IMR-90 (cell line): ENCODE measurements at regions of chr1 and their contacts with region 1.

Region 1: DNA sequence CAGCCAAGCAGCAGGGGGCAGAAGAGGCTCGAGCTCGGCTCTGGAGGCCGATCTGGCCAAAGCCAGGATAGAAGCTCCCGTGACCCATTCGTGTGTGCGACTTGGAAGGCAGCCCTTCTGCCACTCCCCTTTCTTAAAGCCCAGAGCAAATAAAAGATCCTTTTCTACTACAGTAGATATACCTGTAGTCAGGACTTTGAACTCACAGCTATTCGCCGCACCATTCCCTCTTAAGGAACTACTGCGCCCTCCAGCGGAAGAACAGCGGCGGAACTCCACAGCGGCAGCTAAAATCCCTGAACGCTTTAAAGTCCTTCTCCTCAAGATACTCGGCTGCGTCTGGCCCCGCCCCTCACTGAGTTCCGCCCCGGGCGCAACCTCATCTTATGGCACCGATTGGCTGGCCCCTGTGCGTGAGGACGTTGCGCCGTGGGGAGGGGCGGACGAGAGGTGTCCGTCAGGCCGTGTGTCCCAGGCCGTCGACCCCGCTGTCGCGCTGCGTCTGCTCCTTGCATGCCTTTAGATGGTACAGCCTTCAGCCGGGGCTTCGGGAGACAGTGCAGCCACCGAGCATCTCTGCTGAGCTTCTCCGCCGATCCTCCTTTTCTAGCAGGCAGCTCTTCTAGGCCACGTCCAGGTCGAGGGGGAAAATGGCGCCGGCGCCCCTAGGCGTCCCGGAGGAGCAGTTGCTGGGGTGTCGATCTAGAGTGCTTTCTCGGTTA is at the start of gene LRIG2:
- DNase-seq: peak; percentile 97
- ATAC-seq: peak; percentile 98
- H3K4me3 ChIP-seq: peak within 1 kb of the TSS; percentile 85
- H3K27ac ChIP-seq: peak within 1 kb of the TSS; percentile 97
- H3K4me1 ChIP-seq: no peaks in the 10 kb centered on the region; the same call in 1 of the 2 replicates
- H3K27me3 ChIP-seq: no peaks in the 10 kb centered on the region
- CTCF ChIP-seq: peak; percentile 58
- POLR2A ChIP-seq: peak; percentile 60
- RAD21 ChIP-seq: peak; percentile 48; the same call in 1 of the 2 replicates
- total RNA-seq, gene LRIG2: 9.0 and 10.6 TPM in 2 replicates

Region 2: DNA sequence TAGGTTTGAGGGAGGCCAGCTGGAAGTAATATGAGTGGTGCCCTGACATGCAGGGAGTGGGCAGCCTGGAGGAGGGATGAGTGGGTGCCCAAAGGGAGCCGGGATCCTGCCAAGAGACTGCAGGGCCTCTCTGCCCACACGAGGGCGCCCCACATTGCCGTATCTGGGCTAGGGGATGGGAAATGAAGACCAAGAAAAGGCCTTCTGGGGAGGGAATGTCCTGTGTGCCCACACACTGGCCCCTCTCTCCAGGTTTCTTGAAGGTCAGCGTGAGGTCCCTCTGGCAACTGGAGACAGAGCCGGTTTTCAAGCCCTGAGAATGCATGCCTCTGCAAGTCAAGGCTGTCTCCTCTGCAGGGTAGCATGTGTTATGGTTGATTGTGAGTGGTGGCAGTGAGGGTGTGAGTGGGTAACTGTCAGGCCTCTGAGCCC is 263.6 kb before region 1 on chr1:
- CTCF ChIA-PET with region 1: interaction called, 3 read pairs
- POLR2A ChIA-PET with region 1: no interaction called
- dilution Hi-C with region 1: no loop called
- in situ Hi-C with region 1: no loop called
- intact Hi-C with region 1: loop called (anchors 2 kb)
- DNase-seq: peak; percentile 57
- ATAC-seq: peak; percentile 98
- H3K4me3 ChIP-seq: no peak overlapping the region
- H3K27ac ChIP-seq: no peak overlapping the region
- H3K4me1 ChIP-seq: no peaks in the 10 kb centered on the region
- H3K27me3 ChIP-seq: peaks cover 9% of the 10 kb centered on the region
- CTCF ChIP-seq: peak; percentile 87
- POLR2A ChIP-seq: no peak
- RAD21 ChIP-seq: peak; percentile 89

Region 3: GRCh38 chr1:113057006-113057405 is 15.9 kb before region 1 on chr1:
- CTCF ChIA-PET with region 1: interaction called, 27 read pairs
- POLR2A ChIA-PET with region 1: no interaction called
- dilution Hi-C with region 1: no loop called
- in situ Hi-C with region 1: no loop called
- intact Hi-C with region 1: no loop called
- DNase-seq: no peak
- ATAC-seq: peak; percentile 44
- H3K4me3 ChIP-seq: no peak overlapping the region
- H3K27ac ChIP-seq: no peak overlapping the region
- H3K4me1 ChIP-seq: no peaks in the 10 kb centered on the region
- H3K27me3 ChIP-seq: no peaks in the 10 kb centered on the region
- CTCF ChIP-seq: no peak
- POLR2A ChIP-seq: no peak
- RAD21 ChIP-seq: no peak

Region 4: DNA sequence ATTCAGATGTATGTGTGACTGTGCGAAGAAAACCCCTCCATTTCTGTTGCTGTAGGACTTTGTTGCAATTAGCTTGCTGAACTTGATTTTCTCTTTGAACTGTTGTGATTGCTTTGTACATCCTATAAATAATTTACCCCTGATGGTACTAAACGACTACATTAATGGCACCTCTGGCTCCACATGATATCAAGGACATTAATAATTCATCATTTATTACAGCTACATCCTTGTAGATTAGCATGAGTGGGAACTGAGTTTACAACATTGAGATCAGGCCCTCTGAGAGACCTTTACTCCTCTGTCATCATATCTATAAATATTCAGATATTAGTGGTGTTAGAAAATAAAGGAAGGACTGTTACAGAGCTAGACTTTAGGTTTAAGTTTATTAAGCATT is 13.6 kb after region 1 on chr1:
- CTCF ChIA-PET with region 1: interaction called, 15 read pairs
- POLR2A ChIA-PET with region 1: no interaction called
- dilution Hi-C with region 1: no loop called
- in situ Hi-C with region 1: no loop called
- intact Hi-C with region 1: no loop called
- DNase-seq: no peak
- ATAC-seq: no peak
- H3K4me3 ChIP-seq: no peak overlapping the region
- H3K27ac ChIP-seq: no peak overlapping the region
- H3K4me1 ChIP-seq: no peaks in the 10 kb centered on the region
- H3K27me3 ChIP-seq: no peaks in the 10 kb centered on the region
- CTCF ChIP-seq: no peak
- POLR2A ChIP-seq: no peak
- RAD21 ChIP-seq: no peak

Region 5: GRCh38 chr1:113133038-113133437 is 60.1 kb after region 1 on chr1:
- CTCF ChIA-PET with region 1: no interaction called
- POLR2A ChIA-PET with region 1: no interaction called
- dilution Hi-C with region 1: no loop called
- in situ Hi-C with region 1: no loop called
- intact Hi-C with region 1: no loop called
- DNase-seq: no peak
- ATAC-seq: no peak
- H3K4me3 ChIP-seq: no peak overlapping the region
- H3K27ac ChIP-seq: no peak overlapping the region
- H3K4me1 ChIP-seq: no peaks in the 10 kb centered on the region
- H3K27me3 ChIP-seq: no peaks in the 10 kb centered on the region
- CTCF ChIP-seq: no peak
- POLR2A ChIP-seq: no peak
- RAD21 ChIP-seq: no peak

Region 6: GRCh38 chr1:113156368-113156767 is 83.5 kb after region 1 on chr1:
- CTCF ChIA-PET with region 1: no interaction called
- POLR2A ChIA-PET with region 1: no interaction called
- dilution Hi-C with region 1: no loop called
- in situ Hi-C with region 1: no loop called
- intact Hi-C with region 1: no loop called
- DNase-seq: no peak
- ATAC-seq: no peak
- H3K4me3 ChIP-seq: no peak overlapping the region
- H3K27ac ChIP-seq: no peak overlapping the region
- H3K4me1 ChIP-seq: no peaks in the 10 kb centered on the region
- H3K27me3 ChIP-seq: no peaks in the 10 kb centered on the region
- CTCF ChIP-seq: no peak
- POLR2A ChIP-seq: no peak
- RAD21 ChIP-seq: no peak

Region 7: GRCh38 chr1:113191579-113192076 is 118.7 kb after region 1 on chr1:
- CTCF ChIA-PET with region 1: no interaction called
- POLR2A ChIA-PET with region 1: no interaction called
- dilution Hi-C with region 1: no loop called
- in situ Hi-C with region 1: no loop called
- intact Hi-C with region 1: no loop called
- DNase-seq: no peak
- ATAC-seq: no peak
- H3K4me3 ChIP-seq: no peak overlapping the region
- H3K27ac ChIP-seq: no peak overlapping the region
- H3K4me1 ChIP-seq: no peaks in the 10 kb centered on the region
- H3K27me3 ChIP-seq: peaks cover 9% of the 10 kb centered on the region
- CTCF ChIP-seq: no peak
- POLR2A ChIP-seq: no peak
- RAD21 ChIP-seq: no peak